Aorta (tissue), 5 donors: ENCODE measurements at regions of chr3 and their contacts with region 1.

Region 1: GRCh38 chr3:25648107-25648535 is 16.6 kb downstream of the TOP2B start:
- DNase-seq: no peak
- ATAC-seq: peak; percentile 85
- H3K4me3 ChIP-seq: no peak overlapping the region
- H3K27ac ChIP-seq: no peak overlapping the region
- H3K4me1 ChIP-seq: peaks cover 0 to 2% of the 10 kb centered on the region in 2 donors
- H3K27me3 ChIP-seq: no peaks in the 10 kb centered on the region

Region 2: DNA sequence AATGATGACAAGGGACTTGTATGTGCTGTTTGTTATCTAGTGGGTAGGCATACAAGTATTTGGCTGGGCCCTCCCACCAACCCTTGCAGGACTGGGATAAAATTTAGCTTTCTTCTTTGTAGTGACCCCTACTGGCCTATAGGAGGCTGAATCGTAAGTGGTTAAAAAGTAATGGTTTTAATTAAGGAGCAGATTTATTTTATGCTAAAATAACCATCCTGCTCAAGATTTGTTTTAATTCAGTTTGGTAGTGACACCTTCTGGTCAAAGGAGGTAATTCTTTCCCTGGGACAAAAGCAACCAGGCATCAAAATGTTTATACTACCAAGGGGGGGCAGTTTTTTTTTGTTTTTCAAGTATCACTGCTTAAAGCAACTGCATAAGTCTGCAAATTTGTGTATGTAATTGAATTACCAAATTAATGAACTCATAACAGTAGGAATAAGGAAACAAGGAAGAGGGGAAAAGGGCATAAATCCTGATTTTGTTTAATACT is 54.1 kb before region 1 on chr3:
- intact Hi-C with region 1: no loop called
- DNase-seq: no peak
- ATAC-seq: peak; percentile 69
- H3K4me3 ChIP-seq: no peak overlapping the region
- H3K27ac ChIP-seq: no peak overlapping the region
- H3K4me1 ChIP-seq: peaks cover 0 to 4% of the 10 kb centered on the region in 2 donors
- H3K27me3 ChIP-seq: no peaks in the 10 kb centered on the region

Region 3: GRCh38 chr3:25856902-25857518 is 208.9 kb after region 1 on chr3:
- intact Hi-C with region 1: loop called (anchors 5 kb)
- DNase-seq: no peak
- ATAC-seq: no peak
- H3K4me3 ChIP-seq: no peak overlapping the region
- H3K27ac ChIP-seq: no peak overlapping the region
- H3K4me1 ChIP-seq: no peaks in the 10 kb centered on the region
- H3K27me3 ChIP-seq: no peaks in the 10 kb centered on the region

Region 4: DNA sequence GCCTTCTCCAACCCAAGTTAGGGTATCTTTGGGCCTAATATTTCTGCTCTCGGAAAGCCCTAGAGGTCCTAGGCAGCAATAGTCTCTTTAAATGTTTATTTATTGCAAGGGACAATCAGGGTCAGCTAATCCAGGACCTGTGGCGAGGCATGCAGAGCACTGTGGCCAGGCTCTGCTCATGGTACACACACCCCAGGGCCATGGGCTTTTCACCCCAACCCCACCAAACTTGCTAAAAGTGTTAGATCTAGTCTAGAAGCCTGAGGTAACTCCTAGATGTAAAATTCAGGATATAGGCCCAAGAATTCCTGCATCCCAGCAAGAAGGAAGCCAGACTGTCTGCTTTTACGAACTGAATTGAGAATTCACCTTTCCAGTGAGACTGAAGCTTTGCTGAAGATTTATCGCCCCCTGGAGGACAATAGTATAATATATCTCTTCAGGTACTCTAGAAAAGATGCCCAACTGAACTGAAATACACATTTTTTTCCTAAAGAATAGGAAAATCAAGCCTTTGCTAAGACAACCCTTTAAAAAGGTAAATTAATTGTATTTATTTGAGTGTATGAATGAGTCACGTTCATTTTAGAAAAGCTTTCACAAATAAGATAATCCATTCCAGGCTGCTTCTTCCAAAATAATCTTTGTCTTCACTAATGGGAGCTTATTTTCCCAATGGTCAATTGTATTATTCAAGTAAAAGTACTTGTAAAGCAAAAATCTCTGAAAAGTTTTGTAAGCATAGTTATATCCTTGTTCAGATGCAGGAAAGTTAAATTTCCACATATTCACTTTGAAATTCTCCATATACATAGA is 1064.3 kb after region 1 on chr3:
- intact Hi-C with region 1: loop called (anchors 5 to 10 kb)
- DNase-seq: no peak
- ATAC-seq: no peak
- H3K4me3 ChIP-seq: no peak overlapping the region
- H3K27ac ChIP-seq: no peak overlapping the region
- H3K4me1 ChIP-seq: no peaks in the 10 kb centered on the region
- H3K27me3 ChIP-seq: no peaks in the 10 kb centered on the region